IMR-90 (cell line): ENCODE measurements at regions of chr9 and their contacts with region 1.

Region 1: GRCh38 chr9:133144137-133144903 is 19.4 kb downstream of the GBGT1 start:
- DNase-seq: peak; percentile 51
- ATAC-seq: peak; percentile 33
- H3K4me3 ChIP-seq: peak overlapping the region; percentile 31
- H3K27ac ChIP-seq: 0 out of 2 replicates have a peak overlapping the region, but pooled peaks have one; percentile 43
- H3K4me1 ChIP-seq: peaks cover 17% of the 10 kb centered on the region
- H3K27me3 ChIP-seq: no peaks in the 10 kb centered on the region
- CTCF ChIP-seq: peak; percentile 96
- POLR2A ChIP-seq: no peak
- RAD21 ChIP-seq: peak; percentile 86

Region 2: DNA sequence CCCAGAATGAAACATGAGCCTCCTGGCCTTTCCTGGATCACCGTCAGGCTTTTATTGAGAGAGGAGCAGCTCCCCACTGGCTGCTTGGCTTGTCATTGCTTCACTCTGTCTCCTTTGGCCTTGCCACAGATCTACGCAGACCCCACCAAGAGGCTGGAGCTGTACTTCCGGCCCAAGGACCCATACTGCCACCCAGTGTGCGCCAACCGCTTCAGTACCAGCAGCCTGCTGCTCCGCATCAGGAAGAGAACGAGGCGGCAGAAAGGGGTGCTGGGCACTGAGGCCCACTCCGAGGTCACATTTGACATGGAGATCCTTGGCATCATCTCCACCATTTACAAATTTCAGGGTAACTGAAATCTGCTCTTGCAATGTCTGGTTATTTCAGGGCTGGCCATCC is 102.4 kb before region 1 on chr9:
- CTCF ChIA-PET with region 1: interaction called, 4 read pairs
- POLR2A ChIA-PET with region 1: no interaction called
- dilution Hi-C with region 1: no loop called
- in situ Hi-C with region 1: no loop called
- intact Hi-C with region 1: loop called (anchors 1 kb)
- DNase-seq: no peak
- ATAC-seq: no peak
- H3K4me3 ChIP-seq: no peak overlapping the region
- H3K27ac ChIP-seq: no peak overlapping the region
- H3K4me1 ChIP-seq: no peaks in the 10 kb centered on the region
- H3K27me3 ChIP-seq: no peaks in the 10 kb centered on the region
- CTCF ChIP-seq: no peak
- POLR2A ChIP-seq: no peak
- RAD21 ChIP-seq: no peak

Region 3: DNA sequence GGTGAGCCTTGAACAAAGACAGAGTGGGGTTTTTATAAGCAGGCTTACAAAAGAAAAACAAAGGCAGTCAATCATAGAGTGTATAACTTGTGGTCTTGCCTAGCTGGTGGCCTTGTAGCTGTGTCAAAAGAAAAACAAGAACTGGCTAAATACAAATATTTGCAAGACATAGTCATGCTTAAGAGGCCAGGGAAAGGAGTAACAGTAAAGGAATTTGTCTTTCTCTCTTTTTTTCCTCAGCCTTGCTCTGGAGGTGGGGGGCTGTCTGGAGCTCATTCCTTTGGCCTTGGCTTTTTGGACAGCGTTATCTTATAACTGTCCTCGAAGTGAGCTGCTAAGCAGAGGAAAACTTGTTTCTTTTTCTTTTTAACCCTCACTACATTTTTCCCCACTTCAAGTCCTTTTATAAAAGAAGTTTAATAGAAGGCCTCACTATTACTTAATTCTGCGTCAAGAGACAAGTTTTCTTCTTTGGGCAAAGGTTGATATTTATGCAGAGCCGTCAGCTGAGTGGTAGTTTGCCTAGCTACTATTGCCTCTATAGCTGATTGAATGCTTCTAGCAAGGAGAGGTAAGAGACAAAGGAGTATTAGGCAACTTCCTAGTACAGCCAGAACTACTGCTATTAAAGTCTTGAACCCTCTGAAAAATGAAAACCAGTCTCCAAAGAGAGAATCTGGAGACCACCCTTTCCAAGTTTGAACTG is 68.2 kb before region 1 on chr9:
- CTCF ChIA-PET with region 1: interaction called, 10 read pairs
- POLR2A ChIA-PET with region 1: no interaction called
- dilution Hi-C with region 1: no loop called
- in situ Hi-C with region 1: no loop called
- intact Hi-C with region 1: no loop called
- DNase-seq: peak; percentile 87
- ATAC-seq: peak; percentile 91
- H3K4me3 ChIP-seq: no peak overlapping the region
- H3K27ac ChIP-seq: no peak overlapping the region
- H3K4me1 ChIP-seq: peaks cover 7% of the 10 kb centered on the region
- H3K27me3 ChIP-seq: peaks cover 22% of the 10 kb centered on the region
- CTCF ChIP-seq: no peak
- POLR2A ChIP-seq: no peak
- RAD21 ChIP-seq: no peak

Region 4: DNA sequence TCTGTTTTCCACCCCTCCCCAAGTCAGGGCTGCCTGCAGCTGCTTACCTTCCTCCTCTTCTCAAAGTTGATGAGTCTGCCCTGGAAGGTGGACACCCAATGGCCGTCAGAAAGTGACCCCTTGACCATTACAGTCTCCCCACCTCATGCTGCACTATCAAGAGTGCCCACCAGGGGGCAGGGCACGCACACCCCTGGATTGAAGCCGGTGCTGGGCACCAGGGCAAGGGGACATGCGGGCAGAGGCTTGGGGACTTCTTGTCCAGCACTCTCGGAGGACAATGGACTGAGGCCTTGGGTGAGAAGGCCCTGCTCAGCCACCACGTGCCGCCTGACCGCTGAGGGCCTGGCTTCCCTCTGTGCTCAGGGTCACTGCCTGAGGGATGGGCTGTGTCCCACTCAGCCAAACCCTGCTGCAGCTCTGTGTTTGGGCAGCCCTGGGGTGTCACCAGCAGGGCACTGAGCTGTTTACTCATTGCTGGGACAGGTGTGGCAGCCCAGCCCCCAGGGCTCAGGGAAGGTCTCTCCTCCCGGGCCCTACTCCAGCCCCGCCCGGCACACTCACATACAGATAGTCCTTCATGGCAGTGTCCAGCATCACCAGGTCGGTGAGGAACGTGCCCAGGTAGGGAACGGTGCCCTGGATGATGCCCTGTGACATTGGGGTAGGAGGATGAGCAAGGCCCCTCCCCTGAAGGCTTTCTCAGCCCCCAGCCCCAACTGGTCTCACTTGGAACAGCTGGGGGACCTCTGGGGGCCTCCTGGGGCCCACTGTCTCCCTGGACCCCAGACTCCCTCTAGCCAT is 40.9 kb before region 1 on chr9:
- CTCF ChIA-PET with region 1: interaction called, 16 read pairs
- POLR2A ChIA-PET with region 1: no interaction called
- dilution Hi-C with region 1: no loop called
- in situ Hi-C with region 1: loop called (anchors 5 kb)
- intact Hi-C with region 1: loop called (anchors 1 kb)
- DNase-seq: peak; percentile 19
- ATAC-seq: peak; percentile 95
- H3K4me3 ChIP-seq: no peak overlapping the region
- H3K27ac ChIP-seq: no peak overlapping the region
- H3K4me1 ChIP-seq: no peaks in the 10 kb centered on the region
- H3K27me3 ChIP-seq: no peaks in the 10 kb centered on the region
- CTCF ChIP-seq: peak; percentile 88
- POLR2A ChIP-seq: peak; percentile 36; the same call in 1 of the 2 replicates
- RAD21 ChIP-seq: peak; percentile 94

Region 5: GRCh38 chr9:133113949-133114885 is 30.1 kb before region 1 on chr9:
- CTCF ChIA-PET with region 1: interaction called, 10 read pairs
- POLR2A ChIA-PET with region 1: no interaction called
- dilution Hi-C with region 1: no loop called
- in situ Hi-C with region 1: loop called (anchors 5 kb)
- intact Hi-C with region 1: no loop called
- DNase-seq: peak; percentile 21
- ATAC-seq: peak; percentile 42
- H3K4me3 ChIP-seq: no peak overlapping the region
- H3K27ac ChIP-seq: no peak overlapping the region
- H3K4me1 ChIP-seq: peaks cover 23% of the 10 kb centered on the region
- H3K27me3 ChIP-seq: no peaks in the 10 kb centered on the region
- CTCF ChIP-seq: no peak
- POLR2A ChIP-seq: no peak
- RAD21 ChIP-seq: no peak

Region 6: GRCh38 chr9:133133681-133134418 is 10.5 kb before region 1 on chr9:
- CTCF ChIA-PET with region 1: interaction called, 20 read pairs
- POLR2A ChIA-PET with region 1: no interaction called
- dilution Hi-C with region 1: no loop called
- in situ Hi-C with region 1: no loop called
- intact Hi-C with region 1: loop called (anchors 1 kb)
- DNase-seq: peak; percentile 96
- ATAC-seq: peak; percentile 89
- H3K4me3 ChIP-seq: no peak overlapping the region
- H3K27ac ChIP-seq: peak overlapping the region; percentile 68
- H3K4me1 ChIP-seq: peaks cover 31% of the 10 kb centered on the region
- H3K27me3 ChIP-seq: no peaks in the 10 kb centered on the region
- CTCF ChIP-seq: no peak
- POLR2A ChIP-seq: peak; percentile 37; the same call in 1 of the 2 replicates
- RAD21 ChIP-seq: no peak